ENCODE measurements at regions of chr11 and their contacts with region 1.

Region 1: DNA sequence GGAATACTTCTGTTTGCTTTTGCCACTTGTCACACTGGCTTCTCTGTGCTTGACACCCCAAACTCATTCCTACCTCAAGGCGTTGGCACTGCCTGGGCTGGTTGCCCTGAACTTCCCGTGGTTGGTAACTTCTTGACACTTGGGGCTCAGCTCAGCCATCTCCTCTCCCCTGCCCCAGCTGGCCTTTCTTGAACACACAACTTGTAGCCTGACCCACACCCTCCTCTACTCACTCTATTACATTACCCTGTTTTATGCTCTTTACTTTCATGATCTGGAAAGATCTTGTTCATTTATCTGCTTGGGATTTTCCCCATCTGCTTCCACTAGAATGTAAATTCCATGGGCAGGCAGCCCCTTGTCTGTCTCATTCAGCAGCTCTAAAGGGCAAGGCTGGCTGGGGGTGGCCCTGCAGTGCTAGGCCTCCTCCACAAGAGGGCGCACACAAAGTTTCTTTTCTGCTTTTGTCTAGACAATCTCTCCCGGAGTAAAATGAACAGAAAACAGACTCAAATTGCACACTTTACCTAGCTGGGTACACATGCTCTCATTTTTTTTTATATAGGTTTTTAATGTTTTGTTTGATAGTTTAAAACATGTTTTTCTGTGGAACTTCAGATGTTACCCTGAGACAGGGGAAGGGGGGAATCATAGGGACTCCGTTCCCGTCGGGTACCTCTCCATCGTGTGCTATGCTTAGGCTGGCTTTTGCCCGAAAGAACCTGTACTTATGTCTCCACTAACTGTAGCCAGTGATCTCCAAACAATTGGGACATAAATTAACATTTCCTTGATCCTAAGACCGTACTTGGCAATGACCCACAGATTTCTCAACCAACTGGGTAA is 16.4 kb upstream of the MRGPRX2 start:
- DNase-seq: peak; percentile 34 to 36
- ATAC-seq: peak in 7 of 8 donors; percentile 46 to 82 (median 69)
- H3K4me3 ChIP-seq: peak overlapping the region in 1 of 10 donors; percentile 13
- H3K27ac ChIP-seq: no peak overlapping the region
- H3K4me1 ChIP-seq: peaks cover 0 to 7% (median 0%) of the 10 kb centered on the region in 9 donors
- H3K27me3 ChIP-seq: no peaks in the 10 kb centered on the region
- CTCF ChIP-seq: peak; percentile 86 to 99 (median 96)

Region 2: DNA sequence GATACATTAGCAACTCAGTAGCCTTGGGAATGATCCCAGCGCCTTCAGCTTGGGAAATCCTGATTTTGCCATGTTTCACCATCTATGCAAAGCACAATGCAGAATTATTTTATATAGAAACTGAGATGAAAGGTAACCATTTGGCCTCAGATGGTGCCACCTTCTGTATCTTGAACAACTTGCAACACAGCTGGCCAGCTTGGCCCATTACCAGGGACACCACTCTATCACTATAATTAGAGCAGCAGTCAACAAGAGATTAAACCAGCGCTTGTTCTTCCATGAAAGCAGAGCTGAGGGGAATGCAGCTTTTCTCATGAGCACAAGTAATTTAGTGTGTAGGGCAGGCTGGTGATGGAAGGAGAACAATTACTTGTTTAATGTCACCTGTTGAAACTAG is 33.3 kb after region 1 on chr11:
- intact Hi-C with region 1: loop called in 4 of 10 experiments (anchors 1 to 5 kb)
- DNase-seq: peak; percentile 47 to 61
- ATAC-seq: peak in 7 of 8 donors; percentile 69 to 94 (median 90)
- H3K4me3 ChIP-seq: no peak overlapping the region
- H3K27ac ChIP-seq: peak overlapping the region in 4 of 10 donors; percentile 10 to 62 (median 43)
- H3K4me1 ChIP-seq: peaks cover 0 to 8% (median 0%) of the 10 kb centered on the region in 9 donors
- H3K27me3 ChIP-seq: no peaks in the 10 kb centered on the region
- CTCF ChIP-seq: peak in 4 of 9 donors; percentile 17 to 44 (median 42)

Region 3: DNA sequence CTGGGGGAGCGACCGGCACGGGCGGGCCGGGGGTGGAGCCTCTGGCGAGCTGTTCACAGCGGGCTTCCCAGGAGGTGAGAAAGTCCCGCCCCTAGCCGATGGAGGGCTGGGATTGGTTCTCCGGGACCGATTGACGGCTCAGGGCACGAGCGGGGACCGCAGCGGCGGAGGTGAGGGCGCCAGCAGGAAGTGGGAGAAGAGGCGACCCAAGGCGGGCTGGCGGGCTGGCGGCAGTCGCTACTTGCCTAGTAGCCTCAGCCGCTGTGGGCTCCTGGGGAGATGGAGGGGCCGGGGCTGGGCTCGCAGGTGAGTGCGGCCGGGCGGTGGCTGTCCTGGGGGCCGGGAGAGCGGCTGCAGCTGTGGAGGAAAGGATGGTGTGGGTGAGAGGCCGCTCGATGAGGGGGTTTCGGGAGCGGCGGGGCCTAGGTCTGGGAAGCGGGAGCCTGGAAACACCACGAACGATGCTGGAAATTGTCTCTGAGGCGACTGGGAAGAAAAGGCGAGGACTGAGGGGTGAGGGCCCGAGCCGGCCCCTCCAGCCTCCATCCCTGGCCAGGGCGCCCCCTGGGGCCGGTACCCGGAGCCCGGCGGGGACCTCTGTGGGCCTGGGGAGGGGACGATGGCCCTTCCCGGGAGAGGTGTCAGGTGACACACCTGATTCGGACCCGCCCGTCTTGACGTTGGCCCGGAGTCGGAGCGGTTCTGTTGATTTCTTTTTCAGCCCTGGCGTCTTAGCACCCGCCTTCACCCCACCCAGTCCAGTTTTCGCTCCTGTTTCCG is 40.2 kb after region 1 on chr11 and contains the start of gene ZDHHC13:
- intact Hi-C with region 1: loop called in 2 of 10 experiments (anchors 5 kb)
- DNase-seq: peak; percentile 93 to 94
- ATAC-seq: peak; percentile 98 to 100 (median 99)
- H3K4me3 ChIP-seq: peak within 1 kb of the TSS; percentile 76 to 99 (median 85)
- H3K27ac ChIP-seq: peak within 1 kb of the TSS in 6 of 10 donors; percentile 42 to 83 (median 62)
- H3K4me1 ChIP-seq: peaks cover 0 to 31% (median 12%) of the 10 kb centered on the region in 9 donors
- H3K27me3 ChIP-seq: no peaks in the 10 kb centered on the region
- CTCF ChIP-seq: peak in 5 of 9 donors; percentile 32 to 56 (median 48)
- total RNA-seq, gene ZDHHC13: 6.0 to 9.3 (median 6.8) TPM

Measured in heart right ventricle (tissue), 16 donors.